HCT116 (cell line): ENCODE measurements at regions of chr4 and their contacts with region 1.

Region 1: DNA sequence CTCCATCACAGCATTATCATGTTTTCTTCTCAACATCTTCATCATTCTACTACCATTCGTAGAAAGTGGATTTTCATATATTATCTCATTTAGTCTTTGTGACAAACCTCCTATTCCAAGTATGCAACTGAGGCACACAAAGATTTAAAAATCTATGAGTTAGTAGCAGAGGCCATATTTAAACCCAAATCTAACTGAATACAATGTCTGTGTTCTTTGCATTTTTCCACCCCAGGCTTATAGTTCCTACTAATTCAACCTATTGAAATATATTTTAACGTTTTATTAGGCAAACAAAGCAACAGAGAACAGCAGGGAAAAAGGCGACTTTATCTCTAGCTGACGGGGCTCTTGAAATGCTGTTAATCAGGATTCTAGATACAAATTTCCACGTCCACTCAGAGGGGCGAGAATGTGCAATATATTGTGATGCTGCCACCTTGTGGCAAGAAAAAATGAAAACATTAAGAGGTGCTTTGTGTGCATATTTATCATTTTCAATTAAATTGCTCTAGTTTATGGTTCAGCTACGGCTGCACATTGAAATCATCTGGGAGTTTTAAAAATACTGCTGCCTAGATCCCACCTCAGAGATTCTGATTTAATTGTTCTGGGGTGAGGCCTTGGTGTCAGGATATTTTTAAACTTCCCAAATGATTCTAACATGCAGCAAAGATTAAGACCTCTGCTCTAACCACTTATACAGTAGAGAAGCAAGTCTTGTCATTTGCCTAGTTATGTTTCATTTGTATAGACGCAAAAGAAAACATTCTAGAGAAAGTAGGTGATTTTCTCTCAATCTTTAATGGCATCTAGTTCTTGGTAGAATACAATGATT is 315.9 kb downstream of the MAPK10 start:
- DNase-seq: peak; percentile 37
- ATAC-seq: peak; percentile 84
- H3K4me3 ChIP-seq: no peak overlapping the region; a peak in 1 of 4 replicates
- H3K27ac ChIP-seq: no peak overlapping the region
- H3K4me1 ChIP-seq: peaks cover 0 to 4% of the 10 kb centered on the region in 2 experiments; a peak in 1 of 4 replicates
- H3K27me3 ChIP-seq: no peaks in the 10 kb centered on the region
- CTCF ChIP-seq: peak; percentile 39 to 68 (median 61)
- POLR2A ChIP-seq: no peak
- RAD21 ChIP-seq: peak; percentile 78

Region 2: GRCh38 chr4:85084380-85085094 is 959.4 kb before region 1 on chr4:
- CTCF ChIA-PET with region 1: interaction called, 5 read pairs
- POLR2A ChIA-PET with region 1: no interaction called
- RAD21 ChIA-PET with region 1: no interaction called
- intact Hi-C with region 1: loop called (anchors 10 kb)
- DNase-seq: peak; percentile 75
- ATAC-seq: peak; percentile 79
- H3K4me3 ChIP-seq: no peak overlapping the region
- H3K27ac ChIP-seq: no peak overlapping the region
- H3K4me1 ChIP-seq: no peaks in the 10 kb centered on the region
- H3K27me3 ChIP-seq: no peaks in the 10 kb centered on the region
- CTCF ChIP-seq: peak; percentile 49 to 71 (median 70); a peak in 5 of 6 replicates
- POLR2A ChIP-seq: no peak
- RAD21 ChIP-seq: peak; percentile 75

Region 3: GRCh38 chr4:85147439-85148076 is 896.4 kb before region 1 on chr4:
- CTCF ChIA-PET with region 1: no interaction called
- POLR2A ChIA-PET with region 1: no interaction called
- RAD21 ChIA-PET with region 1: no interaction called
- intact Hi-C with region 1: loop called (anchors 5 kb)
- DNase-seq: peak; percentile 69
- ATAC-seq: peak; percentile 93
- H3K4me3 ChIP-seq: no peak overlapping the region; a peak in 1 of 4 replicates
- H3K27ac ChIP-seq: no peak overlapping the region
- H3K4me1 ChIP-seq: no peaks in the 10 kb centered on the region; a peak in 1 of 4 replicates
- H3K27me3 ChIP-seq: no peaks in the 10 kb centered on the region
- CTCF ChIP-seq: peak; percentile 43 to 68 (median 67); a peak in 4 of 6 replicates
- POLR2A ChIP-seq: no peak
- RAD21 ChIP-seq: peak; percentile 83

Region 4: GRCh38 chr4:85756938-85757337 is 287.0 kb before region 1 on chr4:
- CTCF ChIA-PET with region 1: interaction called, 3 read pairs
- POLR2A ChIA-PET with region 1: no interaction called
- RAD21 ChIA-PET with region 1: no interaction called
- intact Hi-C with region 1: loop called (anchors 1 kb)
- DNase-seq: no peak
- ATAC-seq: peak; percentile 80
- H3K4me3 ChIP-seq: no peak overlapping the region
- H3K27ac ChIP-seq: no peak overlapping the region
- H3K4me1 ChIP-seq: no peaks in the 10 kb centered on the region
- H3K27me3 ChIP-seq: no peaks in the 10 kb centered on the region
- CTCF ChIP-seq: peak; percentile 35 to 52 (median 36); a peak in 5 of 6 replicates
- POLR2A ChIP-seq: no peak
- RAD21 ChIP-seq: peak; percentile 47

Region 5: DNA sequence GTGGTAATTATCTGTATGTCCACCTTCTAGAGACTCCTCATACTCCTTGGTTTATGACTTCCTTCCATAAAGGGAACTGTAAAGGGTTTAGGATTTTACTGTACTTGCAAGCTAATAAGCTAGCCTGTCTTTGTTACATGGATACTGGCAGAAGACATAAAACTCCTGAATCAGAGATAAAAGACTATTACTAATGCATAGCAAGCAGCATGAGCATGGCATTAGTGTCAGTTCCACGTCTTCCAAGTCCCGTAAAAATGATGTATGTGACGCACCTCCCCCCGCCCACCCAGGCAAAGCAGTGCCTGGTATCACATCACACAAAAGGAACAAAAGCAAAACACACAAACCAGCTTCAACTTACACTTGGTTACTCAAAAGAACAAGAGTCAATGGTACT is 734.2 kb after region 1 on chr4:
- CTCF ChIA-PET with region 1: no interaction called
- POLR2A ChIA-PET with region 1: no interaction called
- RAD21 ChIA-PET with region 1: no interaction called
- intact Hi-C with region 1: no loop called
- DNase-seq: no peak
- ATAC-seq: no peak
- H3K4me3 ChIP-seq: no peak overlapping the region
- H3K27ac ChIP-seq: no peak overlapping the region
- H3K4me1 ChIP-seq: no peaks in the 10 kb centered on the region
- H3K27me3 ChIP-seq: no peaks in the 10 kb centered on the region
- CTCF ChIP-seq: no peak
- POLR2A ChIP-seq: no peak
- RAD21 ChIP-seq: no peak